Activated CD8-positive, alpha-beta T cell treated with anti-CD3 and anti-CD28 coated beads for 36 hours (primary cell): ENCODE measurements at regions of chr17 and their contacts with region 1.

Region 1: GRCh38 chr17:48363161-48363560 is 66.9 kb downstream of the SKAP1 start:
- DNase-seq: no peak
- ATAC-seq: no peak
- H3K4me3 Mint-ChIP-seq: no peak overlapping the region
- H3K27ac Mint-ChIP-seq: no peak overlapping the region
- H3K4me1 Mint-ChIP-seq: peaks cover 34% of the 10 kb centered on the region
- H3K27me3 Mint-ChIP-seq: no peaks in the 10 kb centered on the region
- CTCF ChIP-seq: no peak

Region 2: GRCh38 chr17:48374650-48375230 is 11.6 kb after region 1 on chr17:
- CTCF ChIA-PET with region 1: interaction called, 11 read pairs
- POLR2A ChIA-PET with region 1: interaction called, 3 read pairs
- intact Hi-C with region 1: no loop called
- DNase-seq: peak; percentile 50
- ATAC-seq: peak; percentile 71
- H3K4me3 Mint-ChIP-seq: no peak overlapping the region
- H3K27ac Mint-ChIP-seq: no peak overlapping the region
- H3K4me1 Mint-ChIP-seq: peaks cover 26% of the 10 kb centered on the region
- H3K27me3 Mint-ChIP-seq: no peaks in the 10 kb centered on the region
- CTCF ChIP-seq: peak; percentile 58